Colonic mucosa (tissue), 4 donors: ENCODE measurements at regions of chrX and their contacts with region 1.

Region 1: DNA sequence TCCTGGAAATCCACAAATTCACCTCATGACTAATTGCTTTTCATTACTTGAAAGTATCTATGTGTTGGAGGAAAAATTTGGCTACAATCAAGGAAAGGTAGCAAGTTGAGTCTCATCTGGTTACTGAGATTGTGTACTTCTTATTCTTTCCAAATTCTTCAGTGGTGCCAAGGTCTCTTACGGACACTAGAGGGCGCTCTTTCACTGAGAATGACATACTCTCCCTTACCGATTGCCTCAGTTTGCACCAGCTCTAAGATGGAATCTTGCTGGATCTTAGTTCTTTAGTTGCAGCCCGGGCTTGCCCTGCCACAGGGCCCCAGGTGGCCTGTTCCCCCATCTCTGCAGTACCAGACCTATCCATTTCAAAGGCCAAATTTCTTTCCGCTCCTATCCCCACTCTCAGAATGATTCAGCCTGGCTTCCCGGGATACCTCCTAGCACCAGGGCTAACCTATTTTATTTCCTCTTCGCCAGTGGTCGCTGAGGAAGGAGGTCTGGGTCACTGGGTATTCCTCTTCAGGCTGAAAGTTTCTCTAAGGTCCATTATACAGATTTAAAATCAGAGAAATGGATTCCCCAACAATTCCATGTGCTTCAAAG is 24.6 kb upstream of the GPR50 start:
- DNase-seq: peak; percentile 26
- H3K4me3 ChIP-seq: no peak overlapping the region
- H3K27ac ChIP-seq: no peak overlapping the region
- H3K4me1 ChIP-seq: no peaks in the 10 kb centered on the region
- H3K27me3 ChIP-seq: no peaks in the 10 kb centered on the region
- CTCF ChIP-seq: peak; percentile 81

Region 2: DNA sequence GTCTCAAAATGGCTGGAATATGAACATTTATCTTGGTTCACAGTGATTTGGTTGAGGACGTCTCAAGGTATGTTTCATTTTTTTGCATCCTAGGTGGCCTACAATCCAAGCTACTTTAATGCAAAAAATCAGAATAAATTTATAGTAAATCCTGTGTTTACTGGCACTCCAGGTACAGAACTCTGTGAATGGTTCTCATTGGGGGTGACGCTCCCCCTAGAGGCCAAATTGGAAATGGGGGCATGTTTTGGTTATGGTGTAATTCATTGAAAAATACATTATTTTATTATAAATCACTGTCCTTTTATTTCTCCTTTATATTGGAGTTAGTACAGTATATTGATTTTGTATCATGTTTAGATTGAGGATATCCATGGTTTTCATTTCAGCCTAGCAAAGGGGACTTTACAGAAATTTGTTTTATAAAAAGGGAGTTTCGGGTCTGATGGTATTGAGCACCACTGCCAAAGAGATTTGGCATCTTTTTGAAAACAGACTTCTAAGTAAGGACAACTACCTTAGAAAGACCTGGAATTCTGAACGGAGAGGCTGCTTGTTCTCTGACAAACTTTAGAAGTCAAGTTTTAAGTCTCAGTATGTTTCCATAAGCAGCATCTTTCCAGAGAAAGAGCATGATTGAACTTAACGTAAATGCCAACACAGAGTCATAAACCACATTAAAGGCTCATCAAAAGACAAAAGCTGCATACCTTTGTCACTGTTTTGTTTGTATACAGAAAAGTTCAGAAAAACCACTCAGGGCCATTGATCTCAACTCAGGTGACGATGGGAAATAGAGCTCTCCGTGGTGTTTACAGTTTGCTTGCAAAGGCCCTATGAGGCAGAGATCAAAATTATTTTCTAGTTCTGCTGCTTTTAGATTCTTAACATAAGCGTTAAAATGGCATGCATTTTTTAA is 563.9 kb before region 1 on chrX:
- intact Hi-C with region 1: no loop called
- DNase-seq: peak; percentile 51
- H3K4me3 ChIP-seq: no peak overlapping the region
- H3K27ac ChIP-seq: no peak overlapping the region
- H3K4me1 ChIP-seq: no peaks in the 10 kb centered on the region
- H3K27me3 ChIP-seq: no peaks in the 10 kb centered on the region
- CTCF ChIP-seq: peak; percentile 50

Region 3: GRCh38 chrX:151359931-151360871 is 208.4 kb after region 1 on chrX:
- intact Hi-C with region 1: loop called (anchors 10 kb)
- DNase-seq: peak; percentile 23
- H3K4me3 ChIP-seq: no peak overlapping the region
- H3K27ac ChIP-seq: no peak overlapping the region
- H3K4me1 ChIP-seq: no peaks in the 10 kb centered on the region
- H3K27me3 ChIP-seq: no peaks in the 10 kb centered on the region
- CTCF ChIP-seq: peak; percentile 39

Region 4: DNA sequence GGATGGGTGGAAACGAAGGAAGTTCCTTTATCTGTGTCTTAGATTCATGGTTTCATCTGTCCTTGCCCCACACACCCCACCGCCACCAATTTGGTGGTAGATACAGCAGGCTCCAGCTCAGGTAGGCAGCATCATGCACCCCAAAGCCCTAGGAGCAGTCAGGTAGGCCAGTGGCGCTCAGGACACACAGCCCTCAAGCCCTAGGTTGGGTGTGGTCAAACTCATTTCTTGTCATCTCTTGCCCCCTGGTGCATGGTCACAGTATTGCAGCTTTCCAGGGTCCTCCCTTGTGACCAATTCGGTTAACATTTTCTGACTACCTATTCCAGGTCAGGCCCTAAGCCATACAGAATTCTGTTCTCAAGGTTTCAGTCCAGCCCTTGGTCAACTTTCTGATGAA is 529.0 kb after region 1 on chrX:
- intact Hi-C with region 1: loop called (anchors 2 kb)
- DNase-seq: peak; percentile 53
- H3K4me3 ChIP-seq: no peak overlapping the region
- H3K27ac ChIP-seq: no peak overlapping the region
- H3K4me1 ChIP-seq: no peaks in the 10 kb centered on the region
- H3K27me3 ChIP-seq: no peaks in the 10 kb centered on the region
- CTCF ChIP-seq: peak; percentile 42